Spleen (tissue), 13 donors: ENCODE measurements at regions of chr1 and their contacts with region 1.

Region 1: GRCh38 chr1:31182352-31182751 is 57.3 kb downstream of the NKAIN1 start:
- DNase-seq: peak; percentile 82
- H3K4me3 ChIP-seq: peak overlapping the region in 1 of 8 donors; percentile 50
- H3K27ac ChIP-seq: no peak overlapping the region
- H3K4me1 ChIP-seq: peaks cover 6 to 17% (median 15%) of the 10 kb centered on the region in 6 donors
- H3K27me3 ChIP-seq: peaks cover 0 to 78% (median 22%) of the 10 kb centered on the region in 7 donors
- CTCF ChIP-seq: peak in 1 of 11 experiments; percentile 22
- POLR2A ChIP-seq: no peak

Region 2: DNA sequence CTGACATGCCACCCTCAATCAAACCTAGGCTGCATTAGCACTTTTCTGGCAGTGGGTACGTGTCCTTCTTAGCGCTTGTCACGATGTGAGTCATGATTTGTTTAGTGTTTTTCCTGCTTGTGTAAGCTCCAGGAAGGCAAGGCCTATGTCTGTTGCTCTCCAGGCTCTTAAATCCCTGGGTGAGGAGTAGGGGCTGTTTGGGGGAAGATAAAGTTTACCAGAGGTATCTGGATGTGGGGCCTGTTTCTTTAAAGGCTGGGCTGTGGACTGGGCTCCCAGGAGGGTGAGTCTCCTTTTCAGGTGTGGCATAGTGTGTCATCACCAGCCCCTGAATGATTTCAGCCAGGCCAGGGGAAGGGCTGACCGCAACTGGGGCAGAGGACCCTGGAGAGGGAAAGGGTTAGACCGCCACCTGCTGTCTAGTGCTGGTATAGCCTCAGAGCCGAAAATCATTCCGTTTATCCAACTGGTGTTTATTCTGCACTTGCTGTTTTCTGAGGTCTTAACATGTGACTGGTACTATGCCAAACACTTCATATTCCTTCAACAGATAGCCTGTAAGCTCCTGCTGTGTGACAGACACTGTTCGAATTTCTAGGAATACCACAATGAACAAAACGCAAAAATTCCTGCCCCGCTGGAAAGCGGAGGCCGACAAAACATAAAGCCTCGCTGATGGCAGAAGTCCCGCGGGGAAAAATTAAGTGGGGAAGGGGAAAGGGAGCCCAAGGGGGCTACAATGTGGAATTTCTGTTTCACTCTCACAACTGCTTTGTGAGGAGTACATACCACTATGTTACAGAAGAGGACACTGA is 240.4 kb after region 1 on chr1:
- intact Hi-C with region 1: loop called (anchors 5 kb)
- DNase-seq: peak; percentile 81
- H3K4me3 ChIP-seq: peak overlapping the region in 1 of 8 donors; percentile 5
- H3K27ac ChIP-seq: peak overlapping the region in 1 of 8 donors; percentile 62
- H3K4me1 ChIP-seq: peaks cover 0 to 21% (median 15%) of the 10 kb centered on the region in 6 donors
- H3K27me3 ChIP-seq: peaks cover 0 to 21% (median 0%) of the 10 kb centered on the region in 7 donors
- CTCF ChIP-seq: peak; percentile 76 to 94 (median 91)
- POLR2A ChIP-seq: no peak

Region 3: GRCh38 chr1:31548907-31549808 is 366.8 kb after region 1 on chr1:
- intact Hi-C with region 1: loop called (anchors 10 kb)
- DNase-seq: peak; percentile 89
- H3K4me3 ChIP-seq: peak overlapping the region in 1 of 8 donors; percentile 47
- H3K27ac ChIP-seq: no peak overlapping the region
- H3K4me1 ChIP-seq: peaks cover 0 to 17% (median 10%) of the 10 kb centered on the region in 6 donors
- H3K27me3 ChIP-seq: peaks cover 0 to 35% (median 0%) of the 10 kb centered on the region in 7 donors
- CTCF ChIP-seq: peak; percentile 91 to 98 (median 96)
- POLR2A ChIP-seq: no peak